ENCODE measurements at regions of chr10 and their contacts with region 1.

Region 1: DNA sequence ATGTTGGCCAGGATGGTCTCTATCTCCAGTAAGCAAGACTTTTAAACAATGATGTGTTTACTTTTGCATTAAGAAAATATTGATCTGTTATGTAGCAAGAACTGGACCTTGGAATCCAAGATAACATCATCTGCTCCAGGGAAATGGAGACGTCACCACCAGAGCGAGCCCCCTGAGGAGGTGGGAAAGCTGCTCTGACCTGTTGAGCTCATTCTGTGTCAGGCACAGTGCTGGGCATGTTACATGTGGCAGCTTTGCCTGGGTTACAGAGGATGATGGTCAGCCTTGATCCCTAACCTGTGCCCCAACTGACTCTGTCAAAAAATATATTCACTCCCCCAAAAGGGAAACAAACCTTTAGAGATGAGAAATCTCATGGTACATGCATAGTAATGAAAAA is 436.3 kb downstream of the SORCS1 start:
- DNase-seq: no peak
- CTCF ChIP-seq: no peak

Region 2: GRCh38 chr10:106500559-106501525 is 227.4 kb before region 1 on chr10:
- CTCF ChIA-PET with region 1: no interaction called
- POLR2A ChIA-PET with region 1: no interaction called
- DNase-seq: no peak
- CTCF ChIP-seq: no peak

Region 3: DNA sequence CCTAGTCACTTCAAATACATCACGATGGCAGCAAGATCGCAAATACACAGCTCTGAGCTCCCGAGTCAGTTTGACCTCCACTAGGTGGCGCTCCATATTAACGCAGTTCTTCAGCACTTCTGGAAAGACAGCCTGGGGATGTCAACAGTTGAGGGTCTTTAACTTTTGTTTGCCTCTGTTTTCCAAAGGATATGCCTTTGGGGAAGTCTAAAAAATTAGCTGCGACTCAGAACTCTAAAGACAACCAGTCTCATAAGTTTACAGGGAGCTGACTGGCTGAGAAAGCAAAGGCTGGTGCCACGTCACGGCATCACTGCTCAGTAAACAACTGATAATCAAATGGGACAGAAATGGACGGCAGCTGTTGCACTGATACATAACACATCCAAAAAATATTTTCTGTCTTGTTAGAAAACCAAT is 22.5 kb before region 1 on chr10:
- CTCF ChIA-PET with region 1: interaction called, 11 read pairs
- POLR2A ChIA-PET with region 1: no interaction called
- DNase-seq: peak; percentile 39
- CTCF ChIP-seq: peak; percentile 84

Measured in GM10248 (cell line).